ENCODE measurements at regions of chr10 and their contacts with region 1.

Region 1: GRCh38 chr10:132307823-132308587 is at the start of gene STK32C:
- DNase-seq: peak; percentile 96
- H3K4me3 ChIP-seq: peak within 1 kb of the TSS; percentile 75 to 92 (median 89)
- H3K27ac ChIP-seq: peak within 1 kb of the TSS; percentile 80 to 89 (median 86)
- H3K4me1 ChIP-seq: peaks cover 0 to 19% (median 16%) of the 10 kb centered on the region in 4 donors
- H3K27me3 ChIP-seq: no peaks in the 10 kb centered on the region
- CTCF ChIP-seq: no peak
- EP300 ChIP-seq: no peak
- POLR2A ChIP-seq: peak in 1 of 2 donors; percentile 22
- total RNA-seq, gene STK32C: 4.3 to 8.4 (median 6.1) TPM

Region 2: GRCh38 chr10:132272231-132272971 is 35.6 kb before region 1 on chr10:
- intact Hi-C with region 1: loop called (anchors 5 kb)
- DNase-seq: peak; percentile 81
- H3K4me3 ChIP-seq: peak overlapping the region in 2 of 4 donors; percentile 3 to 11
- H3K27ac ChIP-seq: peak overlapping the region in 3 of 4 donors; percentile 41 to 75 (median 68)
- H3K4me1 ChIP-seq: peaks cover 0 to 18% (median 15%) of the 10 kb centered on the region in 4 donors
- H3K27me3 ChIP-seq: no peaks in the 10 kb centered on the region
- CTCF ChIP-seq: no peak
- EP300 ChIP-seq: no peak
- POLR2A ChIP-seq: no peak

Region 3: GRCh38 chr10:132331526-132332432 is 23.8 kb after region 1 on chr10 and contains the start of gene LRRC27:
- intact Hi-C with region 1: loop called (anchors 1 kb)
- DNase-seq: peak; percentile 99
- H3K4me3 ChIP-seq: peak within 1 kb of the TSS; percentile 81 to 87 (median 84)
- H3K27ac ChIP-seq: peak within 1 kb of the TSS; percentile 86 to 90 (median 87)
- H3K4me1 ChIP-seq: peaks cover 0 to 40% (median 36%) of the 10 kb centered on the region in 4 donors
- H3K27me3 ChIP-seq: no peaks in the 10 kb centered on the region
- CTCF ChIP-seq: no peak
- EP300 ChIP-seq: peak in 1 of 4 donors; percentile 47
- POLR2A ChIP-seq: peak in 1 of 2 donors; percentile 47
- total RNA-seq, gene LRRC27: 6.1 to 15.5 (median 8.1) TPM

Region 4: GRCh38 chr10:132360766-132361447 is 52.9 kb after region 1 on chr10:
- intact Hi-C with region 1: no loop called
- DNase-seq: peak; percentile 64
- H3K4me3 ChIP-seq: no peak overlapping the region
- H3K27ac ChIP-seq: no peak overlapping the region
- H3K4me1 ChIP-seq: no peaks in the 10 kb centered on the region
- H3K27me3 ChIP-seq: no peaks in the 10 kb centered on the region
- CTCF ChIP-seq: peak in 2 of 4 experiments; percentile 42 to 47
- EP300 ChIP-seq: no peak
- POLR2A ChIP-seq: no peak

Measured in sigmoid colon (tissue), 7 donors.